Thyroid gland (tissue), 4 donors: ENCODE measurements at regions of chr5 and their contacts with region 1.

Region 1: GRCh38 chr5:143812085-143812705 is at the start of gene HMHB1:
- DNase-seq: no peak
- H3K4me3 ChIP-seq: no peak within 1 kb of the TSS
- H3K27ac ChIP-seq: no peak within 1 kb of the TSS
- H3K4me1 ChIP-seq: no peaks in the 10 kb centered on the region
- H3K27me3 ChIP-seq: no peaks in the 10 kb centered on the region
- CTCF ChIP-seq: no peak
- POLR2A ChIP-seq: no peak
- total RNA-seq, gene HMHB1: not detected

Region 2: DNA sequence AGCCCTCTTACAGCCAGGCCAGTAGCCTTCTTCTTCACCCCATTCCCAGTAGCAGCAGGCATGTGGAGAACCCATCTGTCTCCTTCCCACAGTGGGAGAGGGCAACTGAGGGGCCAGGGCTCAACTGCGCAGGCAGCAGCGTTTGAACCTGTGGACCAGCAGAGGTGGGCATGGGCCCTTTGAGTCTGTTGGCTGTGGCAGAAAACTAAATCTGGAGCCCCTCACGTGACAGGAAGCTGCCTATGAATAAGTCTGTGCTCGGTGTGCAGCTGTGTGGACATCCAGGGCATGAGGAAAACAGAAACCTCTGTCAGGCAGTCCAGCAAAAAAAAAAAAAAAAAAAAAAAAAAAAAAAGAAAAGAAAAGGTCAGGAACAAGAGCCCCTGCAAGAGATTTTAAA is 219.5 kb before region 1 on chr5:
- intact Hi-C with region 1: no loop called
- DNase-seq: peak in 1 of 2 donors; percentile 2
- H3K4me3 ChIP-seq: no peak overlapping the region
- H3K27ac ChIP-seq: no peak overlapping the region
- H3K4me1 ChIP-seq: no peaks in the 10 kb centered on the region
- H3K27me3 ChIP-seq: no peaks in the 10 kb centered on the region
- CTCF ChIP-seq: no peak
- POLR2A ChIP-seq: no peak

Region 3: GRCh38 chr5:143648696-143649095 is 163.5 kb before region 1 on chr5:
- intact Hi-C with region 1: loop called (anchors 10 kb)
- DNase-seq: peak; percentile 42 to 50
- H3K4me3 ChIP-seq: no peak overlapping the region
- H3K27ac ChIP-seq: no peak overlapping the region
- H3K4me1 ChIP-seq: peaks cover 0 to 14% of the 10 kb centered on the region in 2 donors
- H3K27me3 ChIP-seq: no peaks in the 10 kb centered on the region
- CTCF ChIP-seq: peak in 3 of 6 experiments; percentile 46 to 52 (median 49)
- POLR2A ChIP-seq: no peak

Region 4: DNA sequence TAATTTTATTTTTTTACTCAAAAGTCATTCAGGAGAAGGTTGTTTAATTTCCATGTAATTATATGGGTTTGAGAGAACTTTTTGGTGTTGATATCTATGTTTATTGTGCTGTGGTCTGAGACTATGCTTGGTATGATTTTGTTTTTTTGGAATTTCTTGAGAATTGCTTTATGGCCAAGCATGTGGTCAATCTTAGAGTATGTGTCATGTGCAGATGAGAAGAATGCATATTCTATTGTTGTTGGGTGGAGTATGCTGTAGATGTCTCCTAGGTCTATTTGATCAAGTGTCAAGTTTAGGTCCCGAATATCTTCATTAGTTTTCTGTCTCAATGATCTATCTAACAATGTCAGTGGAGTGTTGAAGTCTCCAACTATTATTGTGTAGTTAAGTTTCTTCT is 134.6 kb after region 1 on chr5:
- intact Hi-C with region 1: no loop called
- DNase-seq: no peak
- H3K4me3 ChIP-seq: no peak overlapping the region
- H3K27ac ChIP-seq: no peak overlapping the region
- H3K4me1 ChIP-seq: no peaks in the 10 kb centered on the region
- H3K27me3 ChIP-seq: no peaks in the 10 kb centered on the region
- CTCF ChIP-seq: no peak
- POLR2A ChIP-seq: no peak